A549 (cell line): ENCODE measurements at regions of chr1 and their contacts with region 1.

Region 1: DNA sequence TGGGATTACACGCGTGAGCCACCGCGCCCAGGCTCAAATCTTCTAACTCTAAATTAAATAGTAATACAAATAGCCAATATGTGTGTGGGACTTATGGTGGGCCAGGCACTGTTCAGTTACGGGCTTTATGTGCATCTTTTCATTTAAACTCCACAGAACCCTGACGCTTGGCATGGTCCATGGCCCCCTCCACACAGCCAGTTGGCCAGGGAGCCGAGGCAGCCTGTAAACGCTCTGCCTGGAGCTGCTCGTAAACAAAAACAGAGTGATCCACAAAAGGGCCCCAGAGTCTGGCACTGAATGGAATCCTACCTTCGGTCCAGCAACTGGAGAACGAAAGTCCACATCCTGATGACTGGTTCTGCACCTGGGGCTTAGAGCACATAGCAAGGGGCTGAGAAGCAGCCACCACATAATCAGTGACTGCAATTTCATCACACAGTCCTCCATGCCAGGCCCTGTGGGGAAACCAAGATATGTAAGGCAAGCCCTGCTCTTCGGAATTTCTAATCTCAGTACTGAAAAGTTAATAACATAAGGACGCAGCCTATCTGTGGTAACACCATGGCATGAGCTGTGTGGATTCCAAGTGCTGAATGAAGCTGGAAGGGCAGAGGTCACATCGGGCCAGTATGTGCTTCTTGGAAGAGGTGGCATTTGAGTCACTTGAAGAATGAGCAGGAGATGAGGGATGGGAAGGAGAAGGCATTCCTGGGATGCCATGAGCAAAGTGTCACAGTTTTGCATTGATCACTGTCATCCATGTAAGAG is 13.5 kb upstream of the ADAMTSL4 start:
- DNase-seq: peak in 1 of 2 experiments; percentile 50
- ATAC-seq: no peak
- H3K4me3 ChIP-seq: no peak overlapping the region
- H3K27ac ChIP-seq: peak overlapping the region in 1 of 2 experiments; percentile 34; a peak in 1 of 6 replicates
- H3K4me1 ChIP-seq: peaks cover 37% of the 10 kb centered on the region
- CTCF ChIP-seq: no peak
- EP300 ChIP-seq: no peak
- POLR2A ChIP-seq: no peak
- RAD21 ChIP-seq: no peak

Region 2: GRCh38 chr1:150464422-150464826 is 71.3 kb before region 1 on chr1:
- CTCF ChIA-PET with region 1: interaction called, 13 read pairs
- POLR2A ChIA-PET with region 1: no interaction called
- DNase-seq: peak; percentile 56 to 72
- ATAC-seq: peak; percentile 66 to 84
- H3K4me3 ChIP-seq: no peak overlapping the region
- H3K27ac ChIP-seq: no peak overlapping the region
- H3K4me1 ChIP-seq: no peaks in the 10 kb centered on the region
- CTCF ChIP-seq: peak; percentile 70
- EP300 ChIP-seq: no peak
- POLR2A ChIP-seq: no peak
- RAD21 ChIP-seq: peak; percentile 71 to 86

Region 3: DNA sequence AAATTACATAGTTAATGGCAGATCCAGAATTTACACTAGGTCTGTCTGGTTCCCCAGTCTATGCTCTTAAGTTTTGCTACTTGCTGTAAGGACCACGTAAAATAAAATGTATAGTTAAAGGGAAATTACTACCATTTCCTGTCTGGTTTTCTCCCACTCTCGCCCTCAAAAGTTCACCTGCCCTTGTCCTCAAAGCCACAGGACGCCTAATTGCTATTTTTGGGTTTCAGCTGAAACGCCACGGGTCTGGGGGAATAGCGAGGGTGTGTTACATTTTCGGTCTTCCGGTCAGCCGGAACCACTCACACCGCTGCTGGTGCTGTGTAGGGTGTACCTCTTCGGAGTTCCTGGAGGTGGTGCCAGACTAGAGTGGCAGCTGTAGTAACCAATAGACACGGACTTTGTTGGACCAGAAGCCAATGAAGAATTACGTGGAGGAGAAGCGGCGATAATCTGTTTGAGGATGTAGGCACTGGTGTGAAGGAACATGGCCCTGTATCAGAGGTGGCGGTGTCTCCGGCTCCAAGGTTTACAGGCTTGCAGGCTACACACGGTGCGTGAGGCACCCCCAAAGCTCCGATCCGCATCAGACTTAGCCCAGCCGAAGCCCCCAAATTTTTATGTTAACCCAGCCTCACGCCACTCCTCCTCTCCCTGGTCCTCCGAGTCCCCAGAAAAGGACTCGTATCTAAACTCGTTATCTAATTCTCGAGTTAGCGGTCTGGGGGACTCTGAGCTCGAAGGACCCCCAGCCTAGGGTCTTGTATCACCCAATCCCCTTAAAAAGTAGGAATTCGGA is 48.5 kb before region 1 on chr1 and contains the start of gene TARS2:
- CTCF ChIA-PET with region 1: interaction called, 15 read pairs
- POLR2A ChIA-PET with region 1: interaction called, 4 read pairs
- DNase-seq: peak; percentile 93 to 99
- ATAC-seq: peak; percentile 99 to 100
- H3K4me3 ChIP-seq: peak within 1 kb of the TSS; percentile 71
- H3K27ac ChIP-seq: peak within 1 kb of the TSS; percentile 87 to 94
- H3K4me1 ChIP-seq: peaks cover 7% of the 10 kb centered on the region; the same call in 2 of the 3 replicates
- CTCF ChIP-seq: no peak
- EP300 ChIP-seq: no peak
- POLR2A ChIP-seq: peak; percentile 73
- RAD21 ChIP-seq: peak in 1 of 2 experiments; percentile 8; a peak in 1 of 5 replicates
- polyA plus RNA-seq, gene TARS2: 21.6 and 24.5 TPM in 2 replicates

Region 4: GRCh38 chr1:150505431-150505830 is 30.3 kb before region 1 on chr1:
- CTCF ChIA-PET with region 1: interaction called, 114 read pairs
- POLR2A ChIA-PET with region 1: no interaction called
- DNase-seq: no peak
- ATAC-seq: no peak
- H3K4me3 ChIP-seq: no peak overlapping the region
- H3K27ac ChIP-seq: no peak overlapping the region
- H3K4me1 ChIP-seq: peaks cover 7% of the 10 kb centered on the region
- CTCF ChIP-seq: no peak
- EP300 ChIP-seq: no peak
- POLR2A ChIP-seq: no peak
- RAD21 ChIP-seq: no peak

Region 5: DNA sequence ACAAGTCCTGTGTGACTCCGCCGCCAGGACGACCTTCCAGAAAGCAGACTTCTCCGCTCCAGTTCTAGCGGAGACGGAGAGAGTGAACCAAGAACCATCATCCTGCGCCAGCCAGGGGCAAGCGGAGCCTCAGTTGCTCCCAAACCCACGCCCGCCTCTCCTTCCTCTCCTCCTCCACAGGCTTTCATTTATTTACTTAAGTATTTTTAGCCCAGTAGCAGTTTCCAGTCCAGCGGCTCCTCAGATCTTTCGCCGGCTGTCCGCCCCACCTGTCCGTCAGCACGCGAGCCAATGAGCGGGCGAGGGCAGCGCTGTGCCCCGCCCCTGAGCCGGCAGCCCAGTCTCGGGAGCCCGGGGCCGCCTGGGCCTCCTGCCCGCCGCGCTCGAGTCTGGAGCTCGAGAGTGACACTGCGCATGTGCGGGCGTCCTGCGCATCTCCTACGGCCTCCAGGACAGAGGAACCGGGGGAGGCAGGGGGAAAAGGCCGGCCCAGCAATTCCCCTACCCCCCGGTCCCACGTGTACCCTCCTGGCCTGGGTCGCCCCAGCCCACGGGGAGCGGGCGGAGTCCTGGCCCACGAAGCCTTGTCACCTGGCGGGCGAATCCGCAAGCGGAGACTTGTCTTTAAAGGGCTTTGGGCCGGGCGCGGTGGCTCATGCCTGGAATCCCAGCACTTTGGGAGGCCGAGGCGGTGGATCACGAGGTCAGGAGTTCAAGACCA is 20.2 kb before region 1 on chr1 and contains the start of gene FALEC:
- CTCF ChIA-PET with region 1: interaction called, 114 read pairs
- POLR2A ChIA-PET with region 1: interaction called, 12 read pairs
- DNase-seq: peak; percentile 96 to 97
- ATAC-seq: peak; percentile 93 to 97
- H3K4me3 ChIP-seq: peak within 1 kb of the TSS; percentile 50
- H3K27ac ChIP-seq: peak within 1 kb of the TSS; percentile 76 to 94
- H3K4me1 ChIP-seq: 0 out of 3 replicates have a peak, but pooled peaks cover 17% of the 10 kb centered on the region
- CTCF ChIP-seq: no peak
- EP300 ChIP-seq: no peak
- POLR2A ChIP-seq: peak; percentile 70
- RAD21 ChIP-seq: no peak
- polyA plus RNA-seq, gene FALEC: 0.36 TPM in 1 of 2 replicates, not detected in the other

Region 6: GRCh38 chr1:150521196-150521968 is 14.3 kb before region 1 on chr1:
- CTCF ChIA-PET with region 1: interaction called, 114 read pairs
- POLR2A ChIA-PET with region 1: interaction called, 3 read pairs
- DNase-seq: no peak
- ATAC-seq: no peak
- H3K4me3 ChIP-seq: no peak overlapping the region
- H3K27ac ChIP-seq: no peak overlapping the region
- H3K4me1 ChIP-seq: 0 out of 3 replicates have a peak, but pooled peaks cover 5% of the 10 kb centered on the region
- CTCF ChIP-seq: no peak
- EP300 ChIP-seq: no peak
- POLR2A ChIP-seq: no peak
- RAD21 ChIP-seq: no peak

Region 7: GRCh38 chr1:150548632-150549495 is 13.2 kb after region 1 on chr1 and contains the start of gene ADAMTSL4:
- CTCF ChIA-PET with region 1: interaction called, 32 read pairs
- POLR2A ChIA-PET with region 1: interaction called, 3 read pairs
- DNase-seq: peak; percentile 80
- ATAC-seq: peak; percentile 74 to 82
- H3K4me3 ChIP-seq: peak within 1 kb of the TSS; percentile 53
- H3K27ac ChIP-seq: peak within 1 kb of the TSS; percentile 75 to 92
- H3K4me1 ChIP-seq: peaks cover 17% of the 10 kb centered on the region
- CTCF ChIP-seq: no peak; the same call in 2 of the 3 replicates
- EP300 ChIP-seq: no peak
- POLR2A ChIP-seq: peak; percentile 36
- RAD21 ChIP-seq: no peak
- polyA plus RNA-seq, gene ADAMTSL4: 1.3 and 1.8 TPM in 2 replicates

Region 8: DNA sequence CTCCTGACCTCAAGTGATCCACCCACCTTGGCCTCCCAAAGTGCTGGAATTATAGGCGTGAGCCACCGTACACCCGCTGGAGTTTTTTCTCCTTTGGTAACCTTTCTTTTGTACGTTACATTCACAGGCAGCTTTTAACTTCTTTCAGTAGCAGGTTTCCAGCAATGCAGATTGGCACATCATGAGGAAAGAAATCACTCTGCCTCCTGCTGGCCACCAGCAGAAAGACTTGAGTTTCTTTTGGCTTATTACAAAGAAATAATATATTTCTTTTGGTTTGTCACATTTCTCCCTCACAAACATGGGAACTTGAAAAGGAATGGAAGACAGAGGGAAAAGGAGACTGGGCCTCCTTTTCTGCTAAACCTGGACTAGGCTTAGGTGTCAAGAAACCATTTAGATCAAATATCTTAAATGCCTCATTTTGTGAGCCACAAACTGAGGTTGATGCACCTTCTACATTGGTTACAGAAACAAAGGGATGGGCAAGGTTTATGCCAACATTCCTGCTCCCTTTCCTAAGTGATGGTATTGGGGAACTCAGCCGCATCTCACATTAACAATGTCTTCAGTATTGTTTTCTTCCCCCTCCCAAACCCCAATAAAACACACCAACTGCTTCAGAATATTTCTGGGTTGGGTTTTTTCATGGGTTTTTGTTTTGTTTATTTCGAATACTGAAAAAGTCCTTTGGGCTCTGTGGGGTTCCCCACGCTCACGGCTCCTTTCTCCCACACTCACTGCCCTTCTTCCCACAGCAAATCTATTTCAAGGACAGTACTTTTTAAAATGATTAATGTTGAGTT is 86.0 kb after region 1 on chr1:
- CTCF ChIA-PET with region 1: no interaction called
- POLR2A ChIA-PET with region 1: no interaction called
- DNase-seq: peak; percentile 62 to 64
- ATAC-seq: peak in 1 of 2 experiments; percentile 35; a peak in 2 of 6 replicates
- H3K4me3 ChIP-seq: no peak overlapping the region
- H3K27ac ChIP-seq: peak overlapping the region in 1 of 2 experiments; percentile 50; a peak in 5 of 6 replicates
- H3K4me1 ChIP-seq: peaks cover 16% of the 10 kb centered on the region
- CTCF ChIP-seq: peak; percentile 66
- EP300 ChIP-seq: no peak
- POLR2A ChIP-seq: no peak
- RAD21 ChIP-seq: peak; percentile 60 to 61